Spleen (tissue), 13 donors: ENCODE measurements at regions of chr1 and their contacts with region 1.

Region 1: GRCh38 chr1:154479764-154480421 is 22.1 kb upstream of the TDRD10 start:
- DNase-seq: no peak
- H3K4me3 ChIP-seq: no peak overlapping the region
- H3K27ac ChIP-seq: peak overlapping the region in 6 of 8 donors; percentile 1 to 54 (median 36)
- H3K4me1 ChIP-seq: peaks cover 8 to 57% (median 29%) of the 10 kb centered on the region in 6 donors
- H3K27me3 ChIP-seq: no peaks in the 10 kb centered on the region
- CTCF ChIP-seq: peak; percentile 87 to 99 (median 96)
- POLR2A ChIP-seq: no peak

Region 2: GRCh38 chr1:154546264-154547063 is 66.6 kb after region 1 on chr1:
- intact Hi-C with region 1: loop called (anchors 5 kb)
- DNase-seq: no peak
- H3K4me3 ChIP-seq: no peak overlapping the region
- H3K27ac ChIP-seq: no peak overlapping the region
- H3K4me1 ChIP-seq: peaks cover 0 to 34% (median 11%) of the 10 kb centered on the region in 6 donors
- H3K27me3 ChIP-seq: no peaks in the 10 kb centered on the region
- CTCF ChIP-seq: peak; percentile 49 to 87 (median 80)
- POLR2A ChIP-seq: no peak

Region 3: DNA sequence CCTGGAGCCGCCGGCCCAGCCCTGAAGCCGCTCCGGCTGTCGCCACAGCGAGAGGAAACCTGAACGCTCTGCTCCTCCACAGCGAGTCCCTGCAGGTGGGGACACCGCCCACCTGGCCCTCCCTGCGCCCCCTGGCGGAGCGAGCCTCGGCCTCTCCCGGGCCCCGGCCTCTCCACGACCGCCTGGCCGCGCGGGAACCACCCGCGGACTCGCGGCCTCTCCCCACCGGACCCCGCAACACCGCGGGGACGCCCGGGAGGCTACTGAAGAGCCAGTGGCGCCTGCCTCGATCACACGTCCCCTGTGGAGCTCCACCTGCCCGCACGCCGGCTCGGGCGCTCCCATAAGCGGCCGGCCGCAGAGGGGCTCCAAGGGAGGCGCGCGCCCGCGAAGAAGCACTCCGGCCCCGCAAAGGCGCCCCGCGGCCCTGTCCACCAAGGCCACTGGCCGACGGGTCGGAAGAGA is 280.6 kb after region 1 on chr1:
- intact Hi-C with region 1: loop called (anchors 10 kb)
- DNase-seq: peak; percentile 95
- H3K4me3 ChIP-seq: peak overlapping the region; percentile 3 to 66 (median 35)
- H3K27ac ChIP-seq: peak overlapping the region in 3 of 8 donors; percentile 9 to 39 (median 37)
- H3K4me1 ChIP-seq: peaks cover 3 to 26% (median 20%) of the 10 kb centered on the region in 6 donors
- H3K27me3 ChIP-seq: peaks cover 0 to 47% (median 20%) of the 10 kb centered on the region in 7 donors
- CTCF ChIP-seq: peak; percentile 62 to 95 (median 91)
- POLR2A ChIP-seq: no peak

Region 4: DNA sequence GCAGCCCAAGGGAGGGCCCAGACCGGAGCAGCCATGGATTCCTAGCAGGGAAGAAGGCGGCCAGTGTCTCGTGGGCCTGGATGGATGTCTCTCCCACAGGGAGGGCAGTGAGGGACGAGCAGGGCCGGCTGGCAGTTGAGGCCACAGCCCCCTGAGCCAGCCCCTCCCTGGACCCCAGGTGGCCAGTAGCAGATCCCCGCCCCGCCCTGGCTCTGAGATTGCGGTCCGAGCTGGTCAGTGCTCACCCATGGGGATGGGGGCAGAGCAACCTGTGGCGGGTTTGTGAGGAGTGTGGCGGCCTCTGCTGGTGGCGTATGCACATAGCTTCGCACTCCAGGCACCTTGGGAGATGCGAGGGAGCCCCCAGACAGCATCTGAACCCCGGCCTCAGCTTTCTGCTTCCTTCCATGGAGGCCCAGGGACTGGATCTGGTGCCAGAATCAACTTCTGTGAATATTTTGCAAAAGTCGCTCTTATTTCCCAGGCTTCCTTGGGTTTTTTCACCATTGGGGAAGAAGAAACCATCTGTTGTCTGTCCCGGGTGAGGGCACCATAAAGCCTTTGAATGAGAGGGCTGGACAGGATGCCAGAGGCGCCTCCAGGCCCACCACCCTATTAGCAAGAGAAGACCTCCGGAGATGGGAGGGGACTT is 398.6 kb after region 1 on chr1:
- intact Hi-C with region 1: loop called (anchors 5 kb)
- DNase-seq: peak; percentile 91
- H3K4me3 ChIP-seq: no peak overlapping the region
- H3K27ac ChIP-seq: no peak overlapping the region
- H3K4me1 ChIP-seq: peaks cover 0 to 14% (median 6%) of the 10 kb centered on the region in 6 donors
- H3K27me3 ChIP-seq: no peaks in the 10 kb centered on the region
- CTCF ChIP-seq: peak; percentile 46 to 95 (median 91)
- POLR2A ChIP-seq: no peak